ENCODE measurements at regions of chr1 and their contacts with region 1.

Region 1: GRCh38 chr1:155308493-155309422 is at the start of gene FDPS:
- DNase-seq: peak; percentile 100
- H3K4me3 Mint-ChIP-seq: peak within 1 kb of the TSS; percentile 100
- H3K27ac Mint-ChIP-seq: peak within 1 kb of the TSS; percentile 97
- H3K4me1 Mint-ChIP-seq: peaks cover 13% of the 10 kb centered on the region
- H3K27me3 Mint-ChIP-seq: no peaks in the 10 kb centered on the region
- CTCF ChIP-seq: no peak
- total RNA-seq, gene FDPS: 176 and 264 TPM in 2 replicates

Region 2: DNA sequence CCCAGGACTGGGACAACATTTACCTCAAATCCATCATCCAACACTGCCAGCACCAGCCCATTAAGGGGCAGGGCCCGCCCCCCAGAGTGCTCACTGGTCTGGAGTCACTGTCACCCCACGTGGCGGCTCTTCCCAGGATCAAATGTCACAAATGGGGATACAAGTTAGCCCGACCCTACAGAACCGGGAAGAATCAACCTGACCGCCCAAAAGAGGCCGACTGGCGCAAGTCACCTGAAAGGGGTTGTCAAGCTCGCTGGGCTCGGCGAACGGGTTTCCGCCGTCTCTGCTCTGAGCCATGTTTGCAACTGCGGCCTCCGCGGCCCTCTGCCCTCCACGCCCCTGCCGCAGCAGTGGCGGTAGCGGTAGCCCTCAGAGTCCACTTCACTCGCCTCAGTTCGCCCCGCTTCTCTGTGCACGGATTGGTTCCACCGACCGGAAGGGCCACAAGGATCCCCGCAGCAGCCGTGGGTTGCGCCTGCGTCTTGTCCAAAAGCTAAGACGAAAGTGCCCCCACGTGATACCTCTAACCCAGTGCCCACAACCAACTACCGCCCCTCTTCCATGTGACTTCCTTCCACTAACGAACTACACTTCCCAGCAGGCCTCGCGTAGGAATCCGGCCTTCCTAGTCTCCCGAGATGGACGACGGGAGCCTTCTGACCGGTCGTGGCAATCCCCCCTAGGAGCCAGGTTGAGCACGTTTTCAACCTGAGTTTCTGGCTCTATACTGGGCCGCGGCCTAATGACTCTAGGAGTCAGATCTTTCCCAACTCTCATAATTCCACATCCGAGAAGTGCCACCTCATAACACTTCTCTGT is 46.7 kb before region 1 on chr1 and contains the start of gene SCAMP3:
- CTCF ChIA-PET with region 1: interaction called, 4 read pairs
- POLR2A ChIA-PET with region 1: interaction called, 19 read pairs
- intact Hi-C with region 1: no loop called
- DNase-seq: peak; percentile 100
- H3K4me3 Mint-ChIP-seq: peak within 1 kb of the TSS; percentile 98
- H3K27ac Mint-ChIP-seq: peak within 1 kb of the TSS; percentile 96
- H3K4me1 Mint-ChIP-seq: peaks cover 18% of the 10 kb centered on the region
- H3K27me3 Mint-ChIP-seq: no peaks in the 10 kb centered on the region
- CTCF ChIP-seq: no peak
- total RNA-seq, gene SCAMP3: 80.6 and 88.1 TPM in 2 replicates

Region 3: GRCh38 chr1:155267373-155267772 is 41.4 kb before region 1 on chr1:
- CTCF ChIA-PET with region 1: no interaction called
- POLR2A ChIA-PET with region 1: interaction called, 19 read pairs
- intact Hi-C with region 1: no loop called
- DNase-seq: no peak
- H3K4me3 Mint-ChIP-seq: no peak overlapping the region
- H3K27ac Mint-ChIP-seq: no peak overlapping the region
- H3K4me1 Mint-ChIP-seq: peaks cover 8% of the 10 kb centered on the region
- H3K27me3 Mint-ChIP-seq: no peaks in the 10 kb centered on the region
- CTCF ChIP-seq: no peak

Region 4: DNA sequence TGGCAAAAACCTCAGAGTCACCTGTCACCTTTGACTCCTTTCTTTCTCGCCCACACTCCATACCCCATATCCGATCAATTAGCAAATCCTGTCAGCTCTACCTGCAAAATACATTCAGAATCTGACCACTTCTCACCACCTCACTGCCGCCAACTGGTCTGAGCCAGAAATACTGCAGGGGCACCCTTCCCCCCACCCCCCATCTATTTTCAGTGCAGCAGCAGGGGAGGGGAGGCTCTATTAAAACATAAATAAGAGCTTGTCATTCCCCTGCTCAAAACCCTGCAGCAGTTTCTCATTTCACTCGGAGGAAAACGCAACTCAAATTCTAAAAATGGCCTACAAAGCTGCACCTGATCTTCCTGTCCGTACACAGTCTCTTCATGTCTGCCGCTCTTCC is 11.4 kb before region 1 on chr1:
- CTCF ChIA-PET with region 1: interaction called, 10 read pairs
- POLR2A ChIA-PET with region 1: interaction called, 9 read pairs
- intact Hi-C with region 1: no loop called
- DNase-seq: no peak
- H3K4me3 Mint-ChIP-seq: no peak overlapping the region
- H3K27ac Mint-ChIP-seq: no peak overlapping the region
- H3K4me1 Mint-ChIP-seq: no peaks in the 10 kb centered on the region
- H3K27me3 Mint-ChIP-seq: peaks cover 25% of the 10 kb centered on the region
- CTCF ChIP-seq: no peak

Measured in MCF 10A (cell line).